Naive thymus-derived CD4-positive, alpha-beta T cell (primary cell): ENCODE measurements at regions of chr5 and their contacts with region 1.

Region 1: GRCh38 chr5:112160652-112161391 is 258.3 kb downstream of the EPB41L4A start:
- DNase-seq: peak; percentile 85 to 96 (median 91)
- ATAC-seq: peak; percentile 100
- H3K4me3 ChIP-seq: peak overlapping the region; percentile 73
- H3K4me3 Mint-ChIP-seq: peak overlapping the region; percentile 81 to 96 (median 94)
- H3K27ac ChIP-seq: peak overlapping the region; percentile 80
- H3K27ac Mint-ChIP-seq: peak overlapping the region; percentile 60 to 95 (median 89)
- H3K4me1 ChIP-seq: peaks cover 10 to 16% of the 10 kb centered on the region in 2 donors
- H3K4me1 Mint-ChIP-seq: peaks cover 18 to 41% (median 31%) of the 10 kb centered on the region in 7 donors
- H3K27me3 ChIP-seq: no peaks in the 10 kb centered on the region
- H3K27me3 Mint-ChIP-seq: no peaks in the 10 kb centered on the region

Region 2: DNA sequence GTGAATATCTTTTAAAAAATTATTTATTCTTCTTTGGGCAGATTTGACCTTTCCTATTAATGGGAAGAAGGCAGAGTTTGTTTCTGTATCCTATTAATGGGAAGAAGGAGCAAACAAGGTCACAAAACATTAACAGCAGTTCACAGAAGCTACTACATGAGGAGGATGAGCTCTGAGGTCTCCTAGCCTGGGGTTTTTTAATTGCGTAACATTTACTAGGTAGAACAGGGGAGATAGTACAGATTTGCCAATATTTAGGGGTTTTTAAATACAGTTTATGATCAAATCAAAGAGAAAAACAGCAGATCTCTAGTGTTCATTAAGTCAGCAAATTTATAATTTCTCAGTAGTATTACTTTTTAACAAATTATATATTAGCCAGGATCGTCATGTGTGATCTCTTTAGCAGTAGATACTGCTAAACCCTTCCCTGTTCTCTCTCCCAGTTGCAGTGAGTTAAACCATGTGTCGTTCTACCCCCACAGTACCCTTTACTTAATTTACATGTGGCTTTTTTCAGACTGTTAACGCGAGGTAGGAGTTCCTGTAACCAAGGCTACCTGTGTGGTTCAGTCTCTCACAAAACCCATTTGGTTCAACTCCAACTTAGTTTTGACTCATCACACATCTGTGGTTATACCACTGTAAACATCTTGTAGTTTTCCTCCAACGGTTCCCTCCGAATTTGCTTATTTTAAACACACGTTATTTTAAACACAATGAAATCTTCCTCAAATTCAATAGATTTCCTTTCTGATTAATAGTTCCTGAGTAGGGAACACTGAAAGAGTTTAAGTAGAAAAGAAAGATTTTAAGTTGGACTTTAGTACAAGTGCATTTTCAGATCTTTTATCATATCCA is 1408.7 kb before region 1 on chr5:
- CTCF ChIA-PET with region 1: no interaction called
- POLR2A ChIA-PET with region 1: no interaction called
- intact Hi-C with region 1: loop called (anchors 5 kb)
- DNase-seq: peak in 2 of 9 donors; percentile 8 to 30
- ATAC-seq: peak; percentile 82
- H3K4me3 ChIP-seq: no peak overlapping the region
- H3K4me3 Mint-ChIP-seq: peak overlapping the region in 1 of 10 donors; percentile 68
- H3K27ac ChIP-seq: no peak overlapping the region
- H3K27ac Mint-ChIP-seq: peak overlapping the region in 8 of 9 donors; percentile 5 to 84 (median 59)
- H3K4me1 ChIP-seq: peaks cover 0 to 12% of the 10 kb centered on the region in 2 donors
- H3K4me1 Mint-ChIP-seq: peaks cover 15 to 47% (median 34%) of the 10 kb centered on the region in 7 donors
- H3K27me3 ChIP-seq: no peaks in the 10 kb centered on the region
- H3K27me3 Mint-ChIP-seq: no peaks in the 10 kb centered on the region

Region 3: GRCh38 chr5:111512375-111513130 is 648.3 kb before region 1 on chr5 and contains the start of gene STARD4:
- CTCF ChIA-PET with region 1: no interaction called
- POLR2A ChIA-PET with region 1: no interaction called
- intact Hi-C with region 1: loop called (anchors 1 kb)
- DNase-seq: peak; percentile 79 to 94 (median 92)
- ATAC-seq: peak; percentile 97
- H3K4me3 ChIP-seq: peak within 1 kb of the TSS; percentile 81
- H3K4me3 Mint-ChIP-seq: peak within 1 kb of the TSS; percentile 91 to 100 (median 98)
- H3K27ac ChIP-seq: peak within 1 kb of the TSS; percentile 73
- H3K27ac Mint-ChIP-seq: peak within 1 kb of the TSS; percentile 90 to 98 (median 94)
- H3K4me1 ChIP-seq: peaks cover 0 to 14% of the 10 kb centered on the region in 2 donors
- H3K4me1 Mint-ChIP-seq: peaks cover 17 to 53% (median 28%) of the 10 kb centered on the region in 7 donors
- H3K27me3 ChIP-seq: no peaks in the 10 kb centered on the region
- H3K27me3 Mint-ChIP-seq: no peaks in the 10 kb centered on the region
- total RNA-seq, gene STARD4: 11.1 to 70.8 (median 17.1) TPM

Region 4: GRCh38 chr5:112174959-112175594 is 14.3 kb after region 1 on chr5:
- CTCF ChIA-PET with region 1: interaction called, 18 read pairs
- POLR2A ChIA-PET with region 1: interaction called, 4 read pairs
- intact Hi-C with region 1: no loop called
- DNase-seq: peak in 5 of 9 donors; percentile 19 to 33 (median 26)
- ATAC-seq: peak; percentile 66
- H3K4me3 ChIP-seq: no peak overlapping the region
- H3K4me3 Mint-ChIP-seq: no peak overlapping the region
- H3K27ac ChIP-seq: no peak overlapping the region
- H3K27ac Mint-ChIP-seq: no peak overlapping the region
- H3K4me1 ChIP-seq: peaks cover 0 to 3% of the 10 kb centered on the region in 2 donors
- H3K4me1 Mint-ChIP-seq: peaks cover 0 to 7% (median 2%) of the 10 kb centered on the region in 7 donors
- H3K27me3 ChIP-seq: no peaks in the 10 kb centered on the region
- H3K27me3 Mint-ChIP-seq: peaks cover 8 to 27% (median 20%) of the 10 kb centered on the region in 5 donors

Region 5: DNA sequence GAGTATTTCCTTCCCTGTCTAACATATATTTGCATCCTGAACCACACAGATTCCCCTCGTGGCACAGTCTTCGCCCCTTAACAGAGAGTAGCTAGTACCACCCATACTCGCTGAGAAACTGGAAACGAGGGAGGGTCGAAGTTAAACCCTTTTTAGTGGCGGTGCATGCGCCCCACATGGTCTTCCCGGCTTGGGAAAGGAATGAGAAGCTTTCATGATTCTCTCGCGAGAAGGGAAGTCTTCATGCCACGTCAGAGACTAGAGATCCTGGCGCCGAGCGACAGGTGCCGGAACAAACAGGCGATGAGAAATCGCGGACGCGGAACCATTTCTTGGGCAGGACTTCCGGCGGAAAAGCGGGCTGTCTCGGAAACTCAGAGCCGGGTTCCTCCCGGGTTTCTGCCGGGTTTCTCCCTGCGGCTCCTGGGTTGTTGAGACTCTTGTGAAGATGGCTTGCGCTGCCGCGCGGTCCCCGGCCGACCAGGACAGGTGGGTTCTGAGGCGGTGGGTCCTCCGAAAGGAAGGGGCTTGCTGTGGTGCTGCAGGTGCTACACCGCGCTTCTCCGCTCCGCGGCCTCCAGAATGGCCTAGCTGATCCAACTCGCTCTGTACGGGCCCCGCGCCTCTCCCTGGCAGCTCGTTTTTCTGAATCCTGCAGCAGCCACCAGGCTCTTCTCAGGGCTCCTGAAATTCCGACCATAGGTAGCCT is 700.3 kb after region 1 on chr5 and contains the start of gene SRP19:
- CTCF ChIA-PET with region 1: no interaction called
- POLR2A ChIA-PET with region 1: no interaction called
- intact Hi-C with region 1: loop called in 1 of 2 experiments (anchors 1 kb)
- DNase-seq: peak; percentile 78 to 93 (median 90)
- ATAC-seq: peak; percentile 96
- H3K4me3 ChIP-seq: peak within 1 kb of the TSS; percentile 88
- H3K4me3 Mint-ChIP-seq: peak within 1 kb of the TSS; percentile 91 to 97 (median 96)
- H3K27ac ChIP-seq: peak within 1 kb of the TSS; percentile 89
- H3K27ac Mint-ChIP-seq: peak within 1 kb of the TSS; percentile 95 to 99 (median 97)
- H3K4me1 ChIP-seq: peaks cover 19% of the 10 kb centered on the region in 2 donors
- H3K4me1 Mint-ChIP-seq: peaks cover 5 to 41% (median 32%) of the 10 kb centered on the region in 7 donors
- H3K27me3 ChIP-seq: no peaks in the 10 kb centered on the region
- H3K27me3 Mint-ChIP-seq: peaks cover 5 to 18% (median 6%) of the 10 kb centered on the region in 5 donors
- total RNA-seq, gene SRP19: 34.2 to 70.9 (median 41.5) TPM

Region 6: GRCh38 chr5:113330533-113331208 is 1169.8 kb after region 1 on chr5:
- CTCF ChIA-PET with region 1: no interaction called
- POLR2A ChIA-PET with region 1: no interaction called
- intact Hi-C with region 1: loop called in 1 of 2 experiments (anchors 10 kb)
- DNase-seq: peak in 7 of 9 donors; percentile 56 to 80 (median 73)
- ATAC-seq: peak; percentile 91
- H3K4me3 ChIP-seq: no peak overlapping the region
- H3K4me3 Mint-ChIP-seq: peak overlapping the region in 9 of 10 donors; percentile 8 to 63 (median 40)
- H3K27ac ChIP-seq: no peak overlapping the region
- H3K27ac Mint-ChIP-seq: peak overlapping the region in 7 of 9 donors; percentile 3 to 82 (median 71)
- H3K4me1 ChIP-seq: peaks cover 0 to 4% of the 10 kb centered on the region in 2 donors
- H3K4me1 Mint-ChIP-seq: peaks cover 3 to 21% (median 19%) of the 10 kb centered on the region in 7 donors
- H3K27me3 ChIP-seq: peaks cover 0 to under 1% of the 10 kb centered on the region in 2 donors
- H3K27me3 Mint-ChIP-seq: peaks cover 0 to 13% (median 2%) of the 10 kb centered on the region in 5 donors